ENCODE measurements at regions of chr15 and their contacts with region 1.

Region 1: DNA sequence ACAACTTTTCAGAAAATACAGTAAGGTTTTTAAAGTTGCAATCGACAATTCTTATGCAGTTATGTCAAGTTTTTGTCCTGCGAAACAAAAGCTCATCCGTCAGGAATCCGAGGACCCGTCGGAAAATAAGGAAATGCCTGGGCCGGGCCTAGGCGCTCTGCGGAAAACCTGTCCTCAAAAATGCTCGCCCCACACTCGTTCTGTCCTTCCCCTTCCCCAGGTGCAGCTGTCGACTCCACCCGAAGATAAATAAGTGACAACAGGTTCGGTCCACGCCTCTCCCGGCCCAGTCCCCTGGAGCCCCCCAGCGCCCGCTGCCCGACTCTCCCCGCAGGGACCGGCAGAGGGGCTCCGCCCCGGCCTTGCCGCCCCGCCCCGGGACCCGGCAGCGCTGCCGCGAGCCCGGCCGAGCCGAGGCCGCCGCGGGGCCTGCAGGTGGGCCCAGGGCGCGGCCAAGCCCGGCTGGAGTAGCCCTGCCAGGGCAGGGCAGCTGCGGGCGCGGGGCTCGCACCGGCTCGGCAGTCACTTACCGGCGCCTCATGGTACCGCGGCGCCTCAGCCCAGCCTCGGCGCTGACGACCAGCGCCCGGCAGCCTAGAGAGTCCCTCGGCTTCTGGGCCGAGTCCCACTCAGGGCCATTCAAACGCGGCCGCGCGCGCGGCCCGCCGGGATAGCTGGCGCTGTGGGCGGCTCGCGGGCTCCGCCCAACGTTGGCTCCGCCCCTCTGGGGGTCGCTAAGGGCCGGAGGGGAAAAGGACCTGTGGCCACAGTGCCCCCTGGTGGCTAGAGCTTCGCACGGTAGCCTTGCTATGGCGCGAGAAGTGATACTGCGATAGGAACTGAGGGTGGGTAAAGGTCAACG is at the start of gene KATNBL1:
- DNase-seq: peak; percentile 98
- H3K4me3 Mint-ChIP-seq: peak within 1 kb of the TSS; percentile 87
- H3K27ac Mint-ChIP-seq: peak within 1 kb of the TSS; percentile 69
- H3K4me1 Mint-ChIP-seq: peaks cover 25% of the 10 kb centered on the region
- H3K27me3 Mint-ChIP-seq: no peaks in the 10 kb centered on the region
- total RNA-seq, gene KATNBL1: 44.7 to 56.7 TPM

Region 2: GRCh38 chr15:34038023-34038870 is 171.4 kb before region 1 on chr15:
- CTCF ChIA-PET with region 1: interaction called, 4 read pairs
- POLR2A ChIA-PET with region 1: interaction called, 3 read pairs
- intact Hi-C with region 1: loop called (anchors 1 kb)
- DNase-seq: peak; percentile 79
- H3K4me3 Mint-ChIP-seq: peak overlapping the region; percentile 85
- H3K27ac Mint-ChIP-seq: peak overlapping the region; percentile 90
- H3K4me1 Mint-ChIP-seq: peaks cover 25% of the 10 kb centered on the region
- H3K27me3 Mint-ChIP-seq: no peaks in the 10 kb centered on the region

Region 3: DNA sequence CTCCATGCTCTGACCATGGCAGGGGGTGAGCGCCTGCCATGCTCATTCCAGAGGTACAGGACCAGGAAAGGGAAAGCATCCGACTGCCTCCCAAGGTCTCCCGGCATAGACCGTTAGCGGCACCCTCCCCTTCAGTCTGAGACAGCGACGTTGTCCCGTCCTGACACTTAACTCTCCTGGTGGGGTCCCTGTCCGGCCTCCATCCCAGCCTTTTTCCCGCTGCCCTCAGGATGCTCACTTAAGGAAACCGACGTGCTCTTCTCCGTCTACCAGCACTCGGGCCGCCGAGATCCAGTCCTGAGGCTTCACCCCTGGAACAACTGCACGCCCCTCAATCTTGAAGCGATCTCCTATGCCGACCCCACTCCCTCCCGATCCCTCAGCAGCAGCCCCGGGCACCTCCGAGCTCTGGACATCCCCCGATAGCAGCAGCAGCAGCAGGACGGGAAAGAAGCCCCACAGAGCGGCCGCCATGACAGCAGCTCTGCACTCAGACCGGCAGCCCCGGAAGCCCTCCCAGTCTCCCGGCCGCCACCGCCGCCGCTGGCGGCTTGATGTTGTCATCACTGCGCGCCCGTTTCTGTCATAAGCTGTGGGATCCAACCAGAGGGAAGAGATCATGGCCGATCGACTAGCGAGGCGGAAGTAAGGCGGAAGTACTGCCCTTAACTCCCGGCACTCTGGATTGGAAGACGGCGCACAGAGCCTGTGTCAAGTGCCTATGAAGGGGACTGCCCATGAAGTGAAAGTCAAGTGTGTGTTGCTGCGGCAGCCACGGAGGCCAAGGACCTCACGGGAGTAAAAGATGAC is 108.1 kb before region 1 on chr15 and contains the starts of genes EMC7 and PGBD4:
- CTCF ChIA-PET with region 1: interaction called, 98 read pairs
- POLR2A ChIA-PET with region 1: interaction called, 7 read pairs
- intact Hi-C with region 1: loop called (anchors 1 kb)
- DNase-seq: peak; percentile 100
- H3K4me3 Mint-ChIP-seq: peak within 1 kb of the TSS; percentile 99
- H3K27ac Mint-ChIP-seq: peak within 1 kb of the TSS; percentile 96
- H3K4me1 Mint-ChIP-seq: peaks cover 36% of the 10 kb centered on the region
- H3K27me3 Mint-ChIP-seq: no peaks in the 10 kb centered on the region
- total RNA-seq, gene EMC7: 62.7 to 68.4 TPM
- total RNA-seq, gene PGBD4: 2.0 to 2.3 TPM

Region 4: GRCh38 chr15:34154725-34155204 is 54.9 kb before region 1 on chr15:
- CTCF ChIA-PET with region 1: interaction called, 4 read pairs
- POLR2A ChIA-PET with region 1: no interaction called
- intact Hi-C with region 1: loop called (anchors 10 kb)
- DNase-seq: peak; percentile 21
- H3K4me3 Mint-ChIP-seq: no peak overlapping the region
- H3K27ac Mint-ChIP-seq: peak overlapping the region; percentile 74
- H3K4me1 Mint-ChIP-seq: peaks cover 12% of the 10 kb centered on the region
- H3K27me3 Mint-ChIP-seq: no peaks in the 10 kb centered on the region

Region 5: GRCh38 chr15:34587717-34588674 is 378.3 kb after region 1 on chr15:
- CTCF ChIA-PET with region 1: interaction called, 15 read pairs
- POLR2A ChIA-PET with region 1: no interaction called
- intact Hi-C with region 1: no loop called
- DNase-seq: peak; percentile 77
- H3K4me3 Mint-ChIP-seq: peak overlapping the region; percentile 76
- H3K27ac Mint-ChIP-seq: peak overlapping the region; percentile 65
- H3K4me1 Mint-ChIP-seq: peaks cover 13% of the 10 kb centered on the region
- H3K27me3 Mint-ChIP-seq: no peaks in the 10 kb centered on the region